ENCODE measurements at regions of chrX and their contacts with region 1.

Region 1: GRCh38 chrX:78103623-78104446 is at the start of gene PGK1:
- DNase-seq: peak; percentile 94
- ATAC-seq: peak; percentile 97
- H3K4me3 ChIP-seq: peak within 1 kb of the TSS; percentile 43 to 90 (median 76)
- H3K4me3 Mint-ChIP-seq: peak within 1 kb of the TSS; percentile 97
- H3K27ac ChIP-seq: peak within 1 kb of the TSS; percentile 87 to 89
- H3K27ac Mint-ChIP-seq: peak within 1 kb of the TSS; percentile 97
- H3K4me1 ChIP-seq: peaks cover 30 to 44% of the 10 kb centered on the region in 2 donors
- H3K4me1 Mint-ChIP-seq: peaks cover 41% of the 10 kb centered on the region
- H3K27me3 ChIP-seq: no peaks in the 10 kb centered on the region
- H3K27me3 Mint-ChIP-seq: no peaks in the 10 kb centered on the region
- CTCF ChIP-seq: no peak
- total RNA-seq, gene PGK1: 153 and 162 TPM in 2 replicates

Region 2: DNA sequence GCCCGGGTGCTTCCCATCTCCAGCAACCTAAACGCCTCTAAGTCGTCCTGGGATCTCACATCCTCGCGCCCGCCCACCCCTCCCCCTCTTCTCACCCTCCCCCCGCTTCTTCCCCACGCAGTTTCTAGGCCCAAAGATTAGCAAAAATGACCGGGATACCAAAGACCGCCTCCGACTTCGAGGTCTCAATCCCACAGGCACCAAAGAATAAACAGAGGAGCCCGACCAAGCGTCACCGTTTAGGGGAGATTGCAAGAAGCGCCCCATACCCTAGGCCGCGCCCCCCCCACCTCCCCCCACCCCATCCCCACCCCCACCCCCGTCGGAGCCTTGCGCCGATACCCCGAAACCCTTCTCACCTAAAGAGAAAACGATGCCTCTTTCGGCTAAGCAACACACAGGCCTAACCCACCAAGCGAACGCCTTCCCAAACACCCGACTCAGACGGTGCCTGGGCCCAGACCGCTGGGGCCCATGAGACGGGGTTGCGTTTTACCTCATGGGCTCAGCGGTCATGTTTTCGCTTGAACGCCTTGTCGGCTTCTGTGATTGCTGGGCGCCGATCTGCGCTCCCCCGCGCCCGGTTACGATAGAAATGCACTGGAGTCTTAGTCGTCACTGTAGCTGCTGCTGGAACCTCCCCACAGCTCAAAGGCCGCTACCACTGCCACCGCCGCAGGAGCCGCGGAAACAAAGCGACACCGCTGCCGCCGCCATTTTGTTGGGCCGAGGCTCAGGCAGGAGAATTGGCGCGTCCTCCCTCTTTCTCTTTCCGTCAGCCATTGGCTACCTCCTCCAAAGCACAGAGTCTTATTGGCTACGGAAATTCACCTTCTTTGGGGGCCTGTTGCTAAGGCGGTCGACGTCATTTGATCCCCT is 318.1 kb before region 1 on chrX and contains the start of gene ATRX:
- CTCF ChIA-PET with region 1: no interaction called
- POLR2A ChIA-PET with region 1: no interaction called
- intact Hi-C with region 1: loop called (anchors 1 kb)
- DNase-seq: peak; percentile 86
- ATAC-seq: peak; percentile 93
- H3K4me3 ChIP-seq: peak within 1 kb of the TSS; percentile 70 to 89 (median 77)
- H3K4me3 Mint-ChIP-seq: peak within 1 kb of the TSS; percentile 100
- H3K27ac ChIP-seq: peak within 1 kb of the TSS; percentile 96 to 97
- H3K27ac Mint-ChIP-seq: peak within 1 kb of the TSS; percentile 100
- H3K4me1 ChIP-seq: peaks cover 6 to 29% of the 10 kb centered on the region in 2 donors
- H3K4me1 Mint-ChIP-seq: peaks cover 40% of the 10 kb centered on the region
- H3K27me3 ChIP-seq: no peaks in the 10 kb centered on the region
- H3K27me3 Mint-ChIP-seq: no peaks in the 10 kb centered on the region
- CTCF ChIP-seq: no peak
- total RNA-seq, gene ATRX: 173 and 187 TPM in 2 replicates

Region 3: GRCh38 chrX:77910108-77910840 is 193.6 kb before region 1 on chrX and contains the start of gene ATP7A:
- CTCF ChIA-PET with region 1: no interaction called
- POLR2A ChIA-PET with region 1: no interaction called
- intact Hi-C with region 1: loop called (anchors 1 kb)
- DNase-seq: peak; percentile 92
- ATAC-seq: peak; percentile 98
- H3K4me3 ChIP-seq: peak within 1 kb of the TSS; percentile 69 to 87 (median 81)
- H3K4me3 Mint-ChIP-seq: peak within 1 kb of the TSS; percentile 100
- H3K27ac ChIP-seq: peak within 1 kb of the TSS; percentile 83 to 88
- H3K27ac Mint-ChIP-seq: peak within 1 kb of the TSS; percentile 99
- H3K4me1 ChIP-seq: peaks cover 6 to 18% of the 10 kb centered on the region in 2 donors
- H3K4me1 Mint-ChIP-seq: peaks cover 24% of the 10 kb centered on the region
- H3K27me3 ChIP-seq: no peaks in the 10 kb centered on the region
- H3K27me3 Mint-ChIP-seq: no peaks in the 10 kb centered on the region
- CTCF ChIP-seq: peak; percentile 56
- total RNA-seq, gene ATP7A: 12.4 and 14.8 TPM in 2 replicates

Region 4: DNA sequence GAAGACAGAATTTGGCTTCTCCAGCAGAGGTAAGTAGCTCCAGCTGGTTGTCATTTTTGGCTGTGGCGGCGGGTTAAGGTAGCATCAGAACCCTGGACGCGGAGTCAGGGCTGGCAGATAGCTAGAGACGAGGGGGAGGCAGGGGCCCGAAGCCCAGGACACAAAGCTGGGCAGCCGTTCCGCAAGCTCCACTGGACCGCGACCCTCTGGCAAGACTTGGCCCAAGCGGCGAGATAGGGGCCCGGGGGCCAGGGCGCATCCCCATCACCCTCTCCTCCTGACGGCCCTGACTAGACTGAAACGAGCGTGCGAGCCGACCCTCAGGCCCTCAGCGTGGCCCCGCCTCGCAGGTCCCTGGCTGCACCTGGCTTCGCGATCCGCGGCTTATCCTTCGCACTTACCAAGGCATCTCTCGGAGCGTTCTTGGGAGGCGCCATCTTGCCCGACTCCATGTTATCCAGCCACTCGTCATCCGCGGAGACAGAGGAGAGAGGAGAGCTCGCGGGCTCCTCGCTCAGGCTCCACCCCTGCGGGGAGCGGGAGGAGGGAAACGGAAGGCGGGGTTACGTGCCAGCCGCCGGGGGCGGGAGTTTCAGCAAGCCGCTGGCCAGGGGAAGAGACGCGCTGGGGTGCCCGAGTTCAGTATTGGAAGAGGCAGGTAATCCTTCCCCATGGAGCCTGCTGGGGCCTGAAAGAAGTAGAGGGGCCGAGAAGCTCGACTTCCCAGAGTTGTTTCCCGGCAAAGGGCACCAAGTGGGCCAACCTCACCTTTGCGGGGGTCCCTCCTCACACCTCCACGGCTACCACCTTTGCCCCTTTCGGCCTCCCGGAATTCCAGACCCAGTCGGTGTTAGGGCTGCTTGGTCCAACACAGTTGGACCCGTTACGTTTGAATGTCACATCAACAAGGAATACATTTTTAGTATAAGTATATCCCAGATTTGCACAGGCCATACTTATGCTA is 35.6 kb after region 1 on chrX and contains the start of gene TAF9B:
- CTCF ChIA-PET with region 1: no interaction called
- POLR2A ChIA-PET with region 1: interaction called, 3 read pairs
- intact Hi-C with region 1: loop called (anchors 1 kb)
- DNase-seq: peak; percentile 77
- ATAC-seq: peak; percentile 95
- H3K4me3 ChIP-seq: peak within 1 kb of the TSS; percentile 34 to 83 (median 77)
- H3K4me3 Mint-ChIP-seq: peak within 1 kb of the TSS; percentile 95
- H3K27ac ChIP-seq: peak within 1 kb of the TSS; percentile 44 to 71
- H3K27ac Mint-ChIP-seq: peak within 1 kb of the TSS; percentile 90
- H3K4me1 ChIP-seq: peaks cover 0 to 3% of the 10 kb centered on the region in 2 donors
- H3K4me1 Mint-ChIP-seq: peaks cover 6% of the 10 kb centered on the region
- H3K27me3 ChIP-seq: no peaks in the 10 kb centered on the region
- H3K27me3 Mint-ChIP-seq: no peaks in the 10 kb centered on the region
- CTCF ChIP-seq: no peak
- total RNA-seq, gene TAF9B: 12.2 and 13.7 TPM in 2 replicates

Region 5: DNA sequence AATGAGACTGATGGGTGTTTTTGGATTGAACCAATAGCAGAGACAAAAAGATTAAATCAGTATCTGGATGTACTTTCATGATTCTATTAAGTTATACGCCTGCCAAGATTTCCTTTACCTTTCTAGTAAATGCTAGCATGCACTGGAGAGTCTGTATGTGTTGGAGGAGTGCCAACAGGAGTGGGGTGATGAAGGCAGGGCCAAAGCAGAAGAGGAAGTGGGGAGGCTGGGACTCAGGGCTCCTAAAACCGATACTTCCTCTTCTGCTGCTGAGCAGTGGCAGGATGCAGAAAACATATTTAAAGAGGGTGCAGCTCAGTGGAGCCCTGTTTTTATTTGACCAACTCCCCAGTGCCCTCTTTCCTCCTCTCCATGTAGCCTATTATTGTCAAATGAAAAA is 218.0 kb after region 1 on chrX:
- CTCF ChIA-PET with region 1: no interaction called
- POLR2A ChIA-PET with region 1: no interaction called
- intact Hi-C with region 1: loop called (anchors 10 kb)
- DNase-seq: peak; percentile 81
- ATAC-seq: peak; percentile 97
- H3K4me3 ChIP-seq: peak overlapping the region in 1 of 5 experiments; percentile 38
- H3K4me3 Mint-ChIP-seq: peak overlapping the region; percentile 73
- H3K27ac ChIP-seq: peak overlapping the region in 1 of 2 donors; percentile 74
- H3K27ac Mint-ChIP-seq: peak overlapping the region; percentile 77
- H3K4me1 ChIP-seq: peaks cover 41 to 45% of the 10 kb centered on the region in 2 donors
- H3K4me1 Mint-ChIP-seq: peaks cover 55% of the 10 kb centered on the region
- H3K27me3 ChIP-seq: no peaks in the 10 kb centered on the region
- H3K27me3 Mint-ChIP-seq: no peaks in the 10 kb centered on the region
- CTCF ChIP-seq: no peak

Region 6: DNA sequence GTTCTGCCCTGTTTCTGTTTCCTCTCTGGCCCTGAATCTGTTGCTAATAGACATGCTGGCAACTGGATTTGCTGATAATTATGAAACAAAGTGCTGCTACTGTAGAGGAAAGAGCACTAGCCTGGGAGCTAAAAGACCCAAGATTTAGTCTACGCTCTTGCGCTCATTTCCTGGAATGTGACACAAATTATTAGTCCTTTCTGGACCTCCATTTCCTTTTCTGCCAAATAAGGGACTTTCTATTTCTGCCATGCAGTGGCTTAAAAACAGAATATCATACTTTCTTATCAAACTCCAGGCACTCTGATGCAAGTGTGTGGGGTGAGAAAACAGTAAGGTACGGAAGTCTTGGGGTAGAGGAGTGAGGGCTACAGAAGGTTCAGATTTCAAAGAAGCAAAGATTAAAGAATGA is 992.3 kb after region 1 on chrX:
- CTCF ChIA-PET with region 1: no interaction called
- POLR2A ChIA-PET with region 1: no interaction called
- intact Hi-C with region 1: loop called (anchors 10 kb)
- DNase-seq: no peak
- ATAC-seq: no peak
- H3K4me3 ChIP-seq: no peak overlapping the region
- H3K4me3 Mint-ChIP-seq: peak overlapping the region; percentile 34
- H3K27ac ChIP-seq: peak overlapping the region; percentile 12 to 44
- H3K27ac Mint-ChIP-seq: peak overlapping the region; percentile 75
- H3K4me1 ChIP-seq: peaks cover 13 to 17% of the 10 kb centered on the region in 2 donors
- H3K4me1 Mint-ChIP-seq: peaks cover 45% of the 10 kb centered on the region
- H3K27me3 ChIP-seq: no peaks in the 10 kb centered on the region
- H3K27me3 Mint-ChIP-seq: no peaks in the 10 kb centered on the region
- CTCF ChIP-seq: no peak